T-cell (primary cell): ENCODE measurements at regions of chr13 and their contacts with region 1.

Region 1: DNA sequence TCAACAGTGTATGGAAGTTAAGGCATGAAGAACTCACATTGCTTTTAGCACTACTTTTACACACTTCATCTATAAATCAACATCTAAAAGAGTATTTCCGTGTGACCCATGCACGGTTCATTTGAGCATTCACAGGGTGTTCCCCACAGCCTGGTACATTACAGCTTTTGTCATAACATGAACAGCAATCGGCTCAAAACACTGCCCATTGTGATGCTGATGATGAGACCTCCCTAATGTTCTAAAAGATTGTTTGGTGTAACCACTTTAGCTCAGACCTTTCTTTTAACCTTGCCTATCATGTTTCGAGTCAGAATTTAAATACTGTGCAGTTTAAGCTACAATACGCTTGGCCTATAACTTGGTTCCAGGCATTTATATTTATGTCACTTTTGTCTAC is 4.1 kb upstream of the KLF5 start:
- DNase-seq: no peak
- ATAC-seq: no peak
- H3K4me3 ChIP-seq: no peak overlapping the region
- H3K4me3 Mint-ChIP-seq: no peak overlapping the region
- H3K27ac ChIP-seq: no peak overlapping the region
- H3K27ac Mint-ChIP-seq: no peak overlapping the region
- H3K4me1 ChIP-seq: peaks cover 7 to 10% of the 10 kb centered on the region in 2 experiments
- H3K4me1 Mint-ChIP-seq: peaks cover 8 to 13% (median 12%) of the 10 kb centered on the region in 3 donors
- H3K27me3 ChIP-seq: peaks cover 0 to 10% of the 10 kb centered on the region in 2 experiments
- H3K27me3 Mint-ChIP-seq: peaks cover 19 to 36% of the 10 kb centered on the region in 2 donors

Region 2: DNA sequence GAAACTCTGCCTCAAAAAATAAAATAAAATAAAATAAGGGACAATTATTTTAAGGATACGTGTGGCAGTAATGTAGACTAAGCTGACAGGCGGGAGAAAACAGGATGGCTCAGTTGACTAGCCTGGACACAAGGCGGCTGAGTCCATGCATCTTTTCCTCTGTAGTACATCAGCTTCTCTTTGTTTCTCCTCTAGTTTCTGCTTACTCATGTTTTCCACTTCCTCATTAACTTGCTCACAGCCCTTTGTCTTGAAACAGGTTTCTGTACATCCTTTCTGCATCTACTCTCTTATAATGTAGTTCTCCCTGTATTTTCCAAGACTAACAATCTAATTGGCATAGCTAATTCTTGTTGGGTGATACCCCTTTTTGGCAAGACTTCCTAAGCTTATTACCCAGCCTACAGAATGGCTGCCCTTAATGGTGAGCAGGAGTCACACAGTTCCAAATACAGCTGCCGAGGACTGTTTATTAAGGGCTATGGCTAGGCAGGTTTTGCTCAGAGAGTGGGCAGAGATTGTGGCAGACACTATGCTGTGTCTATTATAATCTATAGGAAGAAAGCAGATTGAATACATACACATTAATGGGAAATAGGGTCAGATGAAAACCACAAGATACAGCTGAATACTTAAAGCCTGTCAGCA is 54.6 kb before region 1 on chr13:
- CTCF ChIA-PET with region 1: interaction called in 1 of 2 experiments, 11 read pairs
- POLR2A ChIA-PET with region 1: no interaction called
- DNase-seq: no peak
- ATAC-seq: no peak
- H3K4me3 ChIP-seq: no peak overlapping the region
- H3K4me3 Mint-ChIP-seq: no peak overlapping the region
- H3K27ac ChIP-seq: no peak overlapping the region
- H3K27ac Mint-ChIP-seq: no peak overlapping the region
- H3K4me1 ChIP-seq: no peaks in the 10 kb centered on the region
- H3K4me1 Mint-ChIP-seq: no peaks in the 10 kb centered on the region
- H3K27me3 ChIP-seq: no peaks in the 10 kb centered on the region
- H3K27me3 Mint-ChIP-seq: no peaks in the 10 kb centered on the region

Region 3: GRCh38 chr13:73011751-73012150 is 43.0 kb before region 1 on chr13:
- CTCF ChIA-PET with region 1: no interaction called
- POLR2A ChIA-PET with region 1: no interaction called
- DNase-seq: no peak
- ATAC-seq: no peak
- H3K4me3 ChIP-seq: no peak overlapping the region
- H3K4me3 Mint-ChIP-seq: no peak overlapping the region
- H3K27ac ChIP-seq: no peak overlapping the region
- H3K27ac Mint-ChIP-seq: no peak overlapping the region
- H3K4me1 ChIP-seq: no peaks in the 10 kb centered on the region
- H3K4me1 Mint-ChIP-seq: no peaks in the 10 kb centered on the region
- H3K27me3 ChIP-seq: no peaks in the 10 kb centered on the region
- H3K27me3 Mint-ChIP-seq: no peaks in the 10 kb centered on the region